ENCODE measurements at regions of chr1 and their contacts with region 1.

Region 1: DNA sequence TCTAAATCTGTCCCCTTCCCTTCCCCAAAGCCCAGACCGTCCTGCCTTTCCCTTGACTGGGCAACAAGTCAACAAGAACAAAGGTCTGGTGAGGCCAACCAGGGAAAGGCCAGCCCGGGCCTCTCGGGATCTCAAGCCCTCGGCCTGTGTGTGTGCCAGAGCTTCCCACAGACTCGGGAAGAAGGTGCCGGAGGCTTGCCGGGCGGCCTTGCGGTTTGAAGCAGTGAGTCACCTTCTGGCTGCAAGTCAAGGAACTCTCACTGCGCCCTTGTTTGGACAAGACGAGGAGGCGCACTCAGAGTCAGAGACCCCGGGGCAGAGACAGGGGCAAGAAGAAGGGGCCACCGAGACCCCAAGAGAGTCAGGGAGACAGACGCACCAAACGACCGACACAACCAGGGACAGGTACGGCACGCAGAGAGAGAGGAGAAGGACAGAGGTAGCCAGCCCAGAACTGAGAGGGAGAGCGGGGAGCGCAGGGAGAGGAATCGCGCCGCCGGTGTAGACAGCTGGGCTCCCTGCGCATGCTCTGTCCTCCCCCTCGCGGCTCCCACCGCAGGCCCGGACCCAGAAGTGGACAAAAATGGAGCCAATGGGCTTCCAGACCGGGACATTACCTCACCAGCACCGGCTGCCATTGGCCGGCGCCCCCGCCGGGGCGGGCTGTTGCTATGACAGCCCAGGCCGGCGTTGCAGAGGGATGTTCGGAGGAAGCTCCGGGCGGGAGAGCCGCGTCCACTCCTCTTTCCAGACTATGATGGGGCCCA is 66.6 kb upstream of the LAPTM5 start:
- DNase-seq: peak; percentile 99
- H3K4me3 ChIP-seq: peak overlapping the region; percentile 50 to 60 (median 55)
- H3K27ac ChIP-seq: peak overlapping the region; percentile 89 to 97 (median 92)
- H3K4me1 ChIP-seq: peaks cover 21 to 61% (median 55%) of the 10 kb centered on the region in 4 donors
- H3K27me3 ChIP-seq: no peaks in the 10 kb centered on the region
- CTCF ChIP-seq: no peak
- EP300 ChIP-seq: no peak
- POLR2A ChIP-seq: peak; percentile 55

Region 2: DNA sequence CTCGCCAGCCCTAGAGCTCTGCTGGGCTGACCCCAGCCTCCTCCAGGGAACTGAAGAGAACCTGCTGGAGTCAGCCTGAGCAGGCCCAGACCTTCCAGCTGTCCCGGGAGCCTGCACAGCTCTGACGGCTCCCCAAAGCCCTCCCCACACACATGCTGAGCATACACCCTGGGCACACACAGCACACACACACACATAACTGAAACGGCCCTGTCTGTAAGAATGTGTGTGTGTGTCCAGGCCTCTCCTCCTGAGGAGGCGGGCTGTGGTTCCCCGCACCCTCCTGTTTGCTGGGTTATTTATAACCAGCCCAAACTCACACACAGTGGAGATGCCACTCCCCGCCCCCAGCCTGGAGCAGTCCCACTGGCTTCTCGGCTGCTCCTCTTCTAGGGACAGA is 64.2 kb after region 1 on chr1:
- intact Hi-C with region 1: loop called (anchors 5 kb)
- DNase-seq: no peak
- H3K4me3 ChIP-seq: peak overlapping the region in 2 of 4 donors; percentile 6 to 27
- H3K27ac ChIP-seq: peak overlapping the region; percentile 88 to 95 (median 92)
- H3K4me1 ChIP-seq: peaks cover 54 to 99% (median 90%) of the 10 kb centered on the region in 4 donors
- H3K27me3 ChIP-seq: no peaks in the 10 kb centered on the region
- CTCF ChIP-seq: no peak
- EP300 ChIP-seq: no peak
- POLR2A ChIP-seq: no peak